Endothelial cell of umbilical vein (primary cell): ENCODE measurements at regions of chr12 and their contacts with region 1.

Region 1: GRCh38 chr12:56636675-56637540 is 6.8 kb upstream of the BAZ2A start:
- DNase-seq: peak; percentile 99
- H3K4me3 ChIP-seq: peak overlapping the region in 2 of 3 experiments; percentile 21 to 76
- H3K27ac ChIP-seq: peak overlapping the region; percentile 48
- H3K4me1 ChIP-seq: peaks cover 34% of the 10 kb centered on the region
- H3K27me3 ChIP-seq: no peaks in the 10 kb centered on the region
- CTCF ChIP-seq: peak; percentile 65 to 77
- POLR2A ChIP-seq: peak; percentile 78

Region 2: DNA sequence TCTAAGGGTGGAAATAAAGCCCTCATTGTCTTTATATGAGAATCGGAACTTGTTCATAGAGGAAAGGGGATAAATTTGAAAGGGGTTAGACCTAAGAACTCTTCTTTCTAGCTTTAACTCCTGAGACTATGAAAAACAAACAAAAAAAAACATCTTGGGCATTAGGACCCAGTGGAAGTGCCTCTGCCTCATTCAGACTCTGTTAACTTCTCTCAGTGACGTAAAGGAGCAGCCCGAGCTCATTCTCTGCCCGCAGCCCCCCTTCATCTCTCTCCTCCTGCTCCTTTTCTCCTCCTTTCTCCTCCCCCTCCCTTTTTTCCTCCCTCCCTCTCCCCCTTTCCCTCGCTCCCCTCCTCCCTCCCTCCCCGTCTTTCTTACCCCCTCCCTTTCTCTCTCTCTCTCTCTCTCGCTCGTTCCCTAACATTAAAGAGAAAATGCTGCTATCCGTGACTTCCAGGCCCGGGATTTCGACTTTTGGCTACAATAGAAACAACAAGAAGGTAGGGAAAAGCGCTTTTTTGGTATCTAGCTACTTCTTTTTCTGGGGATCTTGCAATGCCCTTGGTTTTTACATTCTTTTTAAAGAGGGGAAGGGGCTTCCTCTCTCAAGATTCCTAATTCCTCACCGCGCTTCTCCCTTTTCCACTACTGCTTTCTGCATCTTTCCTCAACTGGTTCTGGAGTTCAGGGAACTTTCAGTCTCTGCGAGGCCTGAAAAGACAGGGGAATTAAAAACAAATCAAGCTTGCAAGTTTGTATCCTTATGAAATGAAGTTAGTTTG is 115.1 kb before region 1 on chr12 and contains the start of gene RBMS2:
- CTCF ChIA-PET with region 1: interaction called, 21 read pairs
- POLR2A ChIA-PET with region 1: no interaction called
- dilution Hi-C with region 1: no loop called
- intact Hi-C with region 1: no loop called
- DNase-seq: peak; percentile 94
- H3K4me3 ChIP-seq: peak within 1 kb of the TSS; percentile 61 to 98 (median 95)
- H3K27ac ChIP-seq: peak within 1 kb of the TSS; percentile 87
- H3K4me1 ChIP-seq: peaks cover 57% of the 10 kb centered on the region
- H3K27me3 ChIP-seq: no peaks in the 10 kb centered on the region
- CTCF ChIP-seq: no peak
- POLR2A ChIP-seq: no peak
- total RNA-seq, gene RBMS2: 95.4 and 103 TPM in 2 replicates

Region 3: GRCh38 chr12:56593909-56594621 is 42.8 kb before region 1 on chr12:
- CTCF ChIA-PET with region 1: interaction called, 22 read pairs
- POLR2A ChIA-PET with region 1: interaction called, 10 read pairs
- dilution Hi-C with region 1: no loop called
- intact Hi-C with region 1: no loop called
- DNase-seq: peak; percentile 75
- H3K4me3 ChIP-seq: no peak overlapping the region
- H3K27ac ChIP-seq: peak overlapping the region; percentile 3
- H3K4me1 ChIP-seq: no peaks in the 10 kb centered on the region
- H3K27me3 ChIP-seq: no peaks in the 10 kb centered on the region
- CTCF ChIP-seq: peak; percentile 83 to 87
- POLR2A ChIP-seq: peak; percentile 35

Region 4: DNA sequence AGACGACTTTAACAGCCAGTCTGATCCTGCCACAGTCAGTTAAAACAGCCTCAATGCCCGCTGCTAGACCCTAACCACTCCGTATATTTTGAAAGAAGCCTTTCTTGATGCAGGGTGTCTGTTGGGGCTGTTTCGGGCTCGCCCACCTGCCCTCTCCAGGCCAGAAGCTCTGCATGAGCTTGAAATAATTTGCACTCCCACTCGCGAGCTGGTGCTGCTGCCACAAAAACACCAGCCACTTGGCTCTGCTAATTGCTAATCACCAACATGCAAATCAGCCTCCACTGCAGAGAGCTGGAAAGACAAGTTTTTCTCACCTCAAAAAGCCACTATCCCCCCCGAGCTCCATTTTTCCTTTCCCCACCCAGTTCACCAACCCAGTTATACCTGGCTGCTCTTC is 22.3 kb before region 1 on chr12:
- CTCF ChIA-PET with region 1: interaction called, 150 read pairs
- POLR2A ChIA-PET with region 1: no interaction called
- dilution Hi-C with region 1: no loop called
- intact Hi-C with region 1: no loop called
- DNase-seq: no peak
- H3K4me3 ChIP-seq: no peak overlapping the region
- H3K27ac ChIP-seq: no peak overlapping the region
- H3K4me1 ChIP-seq: no peaks in the 10 kb centered on the region
- H3K27me3 ChIP-seq: no peaks in the 10 kb centered on the region
- CTCF ChIP-seq: no peak
- POLR2A ChIP-seq: no peak

Region 5: DNA sequence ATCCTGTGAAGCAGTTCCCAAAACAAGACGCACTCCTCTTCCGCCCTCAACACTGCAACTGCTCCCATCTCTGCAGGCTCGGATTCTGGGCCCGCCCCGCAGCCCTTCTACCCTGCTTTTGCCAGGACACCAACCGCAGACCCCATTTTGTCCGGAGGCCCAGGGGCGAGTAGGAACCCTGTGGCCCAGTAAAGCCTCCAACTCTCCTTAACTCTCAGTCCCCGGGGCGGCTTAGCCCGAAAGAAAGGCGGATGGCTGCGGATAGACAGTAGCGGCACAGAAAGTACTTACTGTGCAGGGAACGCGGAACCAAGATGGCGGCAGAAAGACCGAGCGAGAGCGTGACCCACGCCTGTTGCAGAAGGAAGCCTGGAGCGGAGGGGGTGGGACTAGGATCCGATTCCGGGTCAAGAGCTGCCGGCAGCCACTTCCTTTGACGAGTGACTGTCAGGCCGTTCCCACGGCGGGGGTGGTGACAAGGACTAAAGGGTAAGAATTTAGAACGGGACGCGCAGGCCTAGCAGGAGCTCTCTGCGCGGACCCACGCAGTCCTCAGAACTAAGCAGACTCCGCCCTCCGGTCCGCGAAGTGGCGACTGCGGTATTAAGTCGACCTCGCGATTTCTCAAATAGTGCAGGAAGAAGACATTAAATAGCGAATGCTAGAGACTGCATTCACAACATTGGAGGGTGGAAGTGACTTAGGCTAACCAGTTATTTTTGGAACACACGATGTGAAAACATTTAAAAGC is 88.2 kb after region 1 on chr12 and contains the start of gene NACA:
- CTCF ChIA-PET with region 1: interaction called, 8 read pairs
- POLR2A ChIA-PET with region 1: interaction called, 6 read pairs
- dilution Hi-C with region 1: no loop called
- intact Hi-C with region 1: loop called (anchors 2 kb)
- DNase-seq: peak; percentile 99
- H3K4me3 ChIP-seq: peak within 1 kb of the TSS; percentile 85 to 90 (median 86)
- H3K27ac ChIP-seq: peak within 1 kb of the TSS; percentile 61
- H3K4me1 ChIP-seq: peaks cover 33% of the 10 kb centered on the region
- H3K27me3 ChIP-seq: no peaks in the 10 kb centered on the region
- CTCF ChIP-seq: no peak
- POLR2A ChIP-seq: peak; percentile 91
- total RNA-seq, gene NACA: 886 and 892 TPM in 2 replicates